WTC11 (cell line): ENCODE measurements at regions of chr12 and their contacts with region 1.

Region 1: DNA sequence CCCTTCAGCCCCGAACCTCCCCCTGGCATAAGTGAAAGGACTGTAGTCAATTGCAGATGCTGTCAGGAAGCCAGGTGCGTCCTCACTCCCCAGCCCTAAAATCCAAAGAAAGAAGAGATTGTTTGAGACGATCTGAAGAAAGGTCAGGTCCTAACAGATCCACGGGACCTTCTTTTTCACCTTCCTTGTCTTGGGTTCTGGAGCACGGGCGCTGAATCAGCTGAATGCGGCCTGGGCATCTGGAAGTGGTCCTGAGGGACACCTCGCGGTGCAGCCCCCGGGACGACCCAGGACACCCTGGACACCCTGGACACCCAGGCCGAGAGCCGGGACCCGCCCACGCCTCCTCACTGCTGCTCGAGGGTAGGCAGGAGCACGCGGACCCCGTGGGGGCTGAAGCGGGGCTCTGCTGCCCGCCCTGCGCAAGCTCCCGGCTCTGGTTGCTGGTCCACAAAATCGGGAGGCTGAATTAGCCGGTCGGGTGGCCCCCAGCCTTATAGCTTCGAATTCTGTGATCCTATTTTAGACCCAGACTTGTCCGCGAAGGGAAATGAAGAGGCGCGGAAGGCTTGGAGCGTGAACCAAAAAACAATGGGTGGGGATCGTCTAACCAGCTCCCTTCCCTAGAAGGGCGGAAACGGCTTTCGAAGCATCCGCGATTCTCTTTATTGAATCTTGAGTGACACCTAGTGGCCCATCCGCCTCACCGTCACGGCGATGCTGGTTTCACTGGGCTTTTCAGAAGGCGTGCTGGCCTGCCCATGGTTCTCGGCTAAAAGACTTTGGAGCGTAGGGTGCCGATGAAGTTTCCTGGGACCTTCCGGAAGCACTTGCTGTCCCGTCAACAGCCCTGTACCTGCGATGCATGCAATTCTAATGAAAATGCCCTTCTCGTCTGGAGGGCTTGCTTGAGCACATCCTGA is 46.4 kb upstream of the PLXNC1 start:
- DNase-seq: peak; percentile 88
- ATAC-seq: peak; percentile 81
- H3K4me3 Mint-ChIP-seq: peak overlapping the region; percentile 75
- H3K27ac Mint-ChIP-seq: no peak overlapping the region
- H3K4me1 Mint-ChIP-seq: peaks cover 9% of the 10 kb centered on the region
- H3K27me3 Mint-ChIP-seq: peaks cover 34% of the 10 kb centered on the region
- CTCF ChIP-seq: peak; percentile 58

Region 2: DNA sequence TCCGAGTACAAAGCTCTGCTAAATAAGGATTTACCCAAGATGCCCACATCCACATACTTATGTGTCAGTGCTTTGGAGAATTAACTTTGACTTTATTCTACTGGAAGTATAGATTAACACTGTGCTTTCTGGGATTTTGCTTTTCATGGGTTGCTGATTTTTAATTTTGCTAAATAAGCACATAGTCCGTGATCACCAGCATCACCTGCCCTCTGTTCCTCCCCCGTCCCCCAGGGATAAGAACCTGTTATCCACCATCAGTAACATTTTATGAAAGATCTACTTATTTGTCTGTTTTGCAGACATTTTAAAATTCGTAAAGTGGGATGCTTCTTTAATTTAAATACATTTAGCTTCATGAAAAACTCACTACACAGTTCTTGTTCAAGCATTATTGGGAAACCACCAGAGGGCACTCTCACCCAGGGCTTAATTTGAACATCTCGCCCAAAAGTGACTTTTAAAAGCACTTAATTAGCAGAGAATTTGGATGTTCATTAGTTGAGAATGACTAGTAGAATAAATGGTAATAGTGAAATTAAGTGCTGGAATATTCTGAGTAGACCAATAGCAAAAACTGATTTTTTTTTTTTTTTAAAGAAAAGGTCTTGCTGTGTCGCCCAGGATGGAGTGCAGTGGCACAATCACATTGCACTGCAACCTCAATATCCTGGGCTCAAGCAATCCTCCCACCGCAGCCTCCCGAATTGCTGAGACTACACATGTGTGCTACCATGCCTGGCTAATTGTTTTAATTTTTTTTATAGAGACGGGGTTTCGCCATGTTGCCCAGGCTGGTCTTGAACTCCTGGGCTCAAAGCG is 599.0 kb before region 1 on chr12:
- CTCF ChIA-PET with region 1: interaction called, 74 read pairs
- POLR2A ChIA-PET with region 1: no interaction called
- DNase-seq: peak; percentile 45
- ATAC-seq: no peak
- H3K4me3 Mint-ChIP-seq: no peak overlapping the region
- H3K27ac Mint-ChIP-seq: no peak overlapping the region
- H3K4me1 Mint-ChIP-seq: no peaks in the 10 kb centered on the region
- H3K27me3 Mint-ChIP-seq: no peaks in the 10 kb centered on the region
- CTCF ChIP-seq: peak; percentile 57

Region 3: DNA sequence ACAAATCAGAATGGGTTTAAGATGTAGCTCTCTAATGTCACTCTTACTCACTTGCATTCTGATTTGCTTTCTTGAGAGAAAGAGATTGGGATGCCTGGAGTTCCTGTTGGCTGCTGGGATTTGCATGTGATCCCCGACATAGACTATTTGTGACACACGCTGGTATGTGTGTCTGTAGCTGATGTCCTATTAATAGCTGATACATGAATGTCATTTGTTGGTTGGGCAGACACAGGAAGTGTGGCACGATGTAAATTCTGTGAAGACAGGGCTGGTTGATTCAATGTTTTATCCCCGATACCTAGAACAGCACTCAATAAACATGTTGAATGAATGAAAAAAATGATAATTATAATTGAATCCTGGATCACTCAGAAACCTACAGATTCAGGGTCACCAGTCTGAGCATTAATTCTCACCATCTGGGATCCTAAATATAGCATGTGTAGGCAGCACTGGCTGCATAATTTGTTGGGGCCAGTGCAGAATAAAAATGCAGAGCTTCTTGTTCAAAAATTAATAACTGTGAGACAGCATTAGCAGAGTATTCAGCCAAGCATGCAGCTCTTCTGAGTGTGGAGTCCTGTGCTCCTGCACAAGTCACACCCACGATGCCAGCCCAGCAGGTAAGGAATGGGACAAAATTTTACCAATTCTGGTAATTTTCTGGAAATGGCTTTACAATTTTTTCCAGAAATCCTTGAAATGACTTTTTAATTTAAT is 565.1 kb before region 1 on chr12:
- CTCF ChIA-PET with region 1: interaction called, 22 read pairs
- POLR2A ChIA-PET with region 1: no interaction called
- DNase-seq: no peak
- ATAC-seq: no peak
- H3K4me3 Mint-ChIP-seq: no peak overlapping the region
- H3K27ac Mint-ChIP-seq: no peak overlapping the region
- H3K4me1 Mint-ChIP-seq: peaks cover 3% of the 10 kb centered on the region
- H3K27me3 Mint-ChIP-seq: no peaks in the 10 kb centered on the region
- CTCF ChIP-seq: no peak

Region 4: GRCh38 chr12:93766796-93767523 is 335.0 kb before region 1 on chr12:
- CTCF ChIA-PET with region 1: interaction called, 42 read pairs
- POLR2A ChIA-PET with region 1: no interaction called
- DNase-seq: no peak
- ATAC-seq: peak; percentile 66
- H3K4me3 Mint-ChIP-seq: no peak overlapping the region
- H3K27ac Mint-ChIP-seq: no peak overlapping the region
- H3K4me1 Mint-ChIP-seq: peaks cover 27% of the 10 kb centered on the region
- H3K27me3 Mint-ChIP-seq: no peaks in the 10 kb centered on the region
- CTCF ChIP-seq: no peak

Region 5: GRCh38 chr12:93851257-93851671 is 250.7 kb before region 1 on chr12:
- CTCF ChIA-PET with region 1: interaction called, 11 read pairs
- POLR2A ChIA-PET with region 1: no interaction called
- DNase-seq: no peak
- ATAC-seq: peak; percentile 46
- H3K4me3 Mint-ChIP-seq: no peak overlapping the region
- H3K27ac Mint-ChIP-seq: no peak overlapping the region
- H3K4me1 Mint-ChIP-seq: peaks cover 18% of the 10 kb centered on the region
- H3K27me3 Mint-ChIP-seq: no peaks in the 10 kb centered on the region
- CTCF ChIP-seq: no peak

Region 6: DNA sequence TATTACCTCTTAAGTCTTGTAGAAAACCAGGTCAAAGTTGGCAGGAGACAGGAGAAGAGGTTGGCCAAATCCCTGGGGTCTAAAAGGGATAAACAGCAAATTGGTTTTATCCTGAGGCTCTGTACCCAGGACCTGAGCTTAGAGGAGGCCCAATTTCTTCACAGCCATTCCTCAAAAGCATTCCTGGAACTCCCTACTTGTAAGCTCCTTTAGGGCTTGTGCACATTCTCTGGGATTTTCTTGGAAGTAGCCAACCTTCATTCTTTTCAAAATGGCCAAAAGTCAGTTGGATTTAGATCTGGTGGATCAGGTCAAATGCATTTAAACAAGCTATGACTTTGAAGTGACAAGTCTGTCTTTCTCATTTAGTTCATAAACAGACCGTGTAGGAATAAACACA is 105.7 kb before region 1 on chr12:
- CTCF ChIA-PET with region 1: interaction called, 49 read pairs
- POLR2A ChIA-PET with region 1: no interaction called
- DNase-seq: no peak
- ATAC-seq: no peak
- H3K4me3 Mint-ChIP-seq: no peak overlapping the region
- H3K27ac Mint-ChIP-seq: no peak overlapping the region
- H3K4me1 Mint-ChIP-seq: peaks cover 7% of the 10 kb centered on the region; the same call in 1 of the 2 replicates
- H3K27me3 Mint-ChIP-seq: no peaks in the 10 kb centered on the region
- CTCF ChIP-seq: no peak

Region 7: GRCh38 chr12:94112132-94112531 is 10.1 kb after region 1 on chr12:
- CTCF ChIA-PET with region 1: interaction called, 34 read pairs
- POLR2A ChIA-PET with region 1: no interaction called
- DNase-seq: no peak
- ATAC-seq: peak; percentile 41; the same call in 1 of the 2 replicates
- H3K4me3 Mint-ChIP-seq: no peak overlapping the region
- H3K27ac Mint-ChIP-seq: no peak overlapping the region
- H3K4me1 Mint-ChIP-seq: peaks cover 7% of the 10 kb centered on the region
- H3K27me3 Mint-ChIP-seq: no peaks in the 10 kb centered on the region
- CTCF ChIP-seq: no peak